ENCODE measurements at regions of chr1 and their contacts with region 1.

Region 1: DNA sequence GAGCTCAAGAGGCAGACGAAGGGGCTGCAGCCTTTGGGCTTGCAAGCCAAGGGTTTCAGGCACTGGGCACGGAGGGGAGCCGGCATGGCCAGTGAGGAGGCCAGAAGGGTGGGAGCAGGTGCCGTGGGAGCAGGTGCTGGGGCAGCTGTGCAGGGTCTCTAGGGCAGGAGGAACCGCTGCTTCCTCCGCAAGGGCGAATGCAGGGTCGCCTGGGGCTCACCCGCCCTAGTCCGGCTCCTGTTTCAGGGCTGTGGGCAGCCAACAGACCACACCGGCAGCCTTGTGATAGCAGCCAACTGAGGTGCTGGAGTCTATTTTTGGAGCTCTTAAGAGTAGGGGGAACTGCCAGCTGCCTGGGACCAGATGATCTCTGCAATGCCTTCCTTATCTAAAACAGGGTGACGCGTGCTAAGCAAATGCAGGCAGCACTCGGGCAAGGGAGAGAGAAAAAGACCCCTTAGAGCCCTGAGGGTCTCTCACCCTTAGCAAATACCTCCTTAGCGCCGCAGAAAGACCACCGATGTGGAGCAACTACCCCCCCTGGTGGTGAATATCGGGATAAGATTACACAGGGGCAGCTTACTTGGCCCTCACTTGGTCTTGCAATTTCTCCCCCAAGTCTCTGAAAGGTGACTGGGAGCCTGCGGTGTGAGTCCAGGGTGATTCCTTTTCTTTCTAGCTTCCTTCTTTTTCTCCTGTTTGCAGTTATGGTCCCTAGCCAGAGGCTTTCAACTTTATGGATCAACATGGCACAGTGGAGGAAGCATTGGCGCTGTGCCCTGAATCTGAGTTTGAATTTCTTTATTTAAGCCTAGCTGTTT is 20.7 kb upstream of the MAPKAPK2 start:
- DNase-seq: peak; percentile 67 to 87
- H3K4me3 ChIP-seq: peak overlapping the region; percentile 5 to 20 (median 16)
- H3K27ac ChIP-seq: no peak overlapping the region
- H3K4me1 ChIP-seq: peaks cover 21 to 37% (median 26%) of the 10 kb centered on the region in 4 donors
- H3K27me3 ChIP-seq: no peaks in the 10 kb centered on the region
- CTCF ChIP-seq: peak in 6 of 7 experiments; percentile 14 to 97 (median 86)
- EP300 ChIP-seq: no peak
- POLR2A ChIP-seq: no peak

Region 2: GRCh38 chr1:206489980-206490770 is 173.9 kb before region 1 on chr1:
- intact Hi-C with region 1: loop called (anchors 10 kb)
- DNase-seq: peak; percentile 84 to 89
- H3K4me3 ChIP-seq: no peak overlapping the region
- H3K27ac ChIP-seq: no peak overlapping the region
- H3K4me1 ChIP-seq: peaks cover 2 to 19% (median 13%) of the 10 kb centered on the region in 4 donors
- H3K27me3 ChIP-seq: no peaks in the 10 kb centered on the region
- CTCF ChIP-seq: peak in 5 of 7 experiments; percentile 89 to 95 (median 93)
- EP300 ChIP-seq: no peak
- POLR2A ChIP-seq: no peak

Region 3: GRCh38 chr1:206635080-206635977 is 28.7 kb before region 1 on chr1 and contains the start of gene DYRK3:
- intact Hi-C with region 1: loop called (anchors 5 kb)
- DNase-seq: peak; percentile 97 to 98
- H3K4me3 ChIP-seq: peak within 1 kb of the TSS; percentile 75 to 97 (median 88)
- H3K27ac ChIP-seq: peak within 1 kb of the TSS; percentile 81 to 91 (median 85)
- H3K4me1 ChIP-seq: peaks cover 9 to 40% (median 30%) of the 10 kb centered on the region in 4 donors
- H3K27me3 ChIP-seq: no peaks in the 10 kb centered on the region
- CTCF ChIP-seq: no peak
- EP300 ChIP-seq: no peak
- POLR2A ChIP-seq: peak in 2 of 4 donors; percentile 61 to 77
- total RNA-seq, gene DYRK3: 1.2 to 21.9 (median 4.7) TPM in 4 of 5 donors, not detected in the other